ENCODE measurements at regions of chr14 and their contacts with region 1.

Region 1: GRCh38 chr14:63632932-63633514 is 8.6 kb downstream of the WDR89 start:
- DNase-seq: no peak
- H3K4me3 ChIP-seq: no peak overlapping the region
- H3K27ac ChIP-seq: no peak overlapping the region
- H3K4me1 ChIP-seq: no peaks in the 10 kb centered on the region
- H3K27me3 ChIP-seq: no peaks in the 10 kb centered on the region
- CTCF ChIP-seq: peak; percentile 59 to 72

Region 2: DNA sequence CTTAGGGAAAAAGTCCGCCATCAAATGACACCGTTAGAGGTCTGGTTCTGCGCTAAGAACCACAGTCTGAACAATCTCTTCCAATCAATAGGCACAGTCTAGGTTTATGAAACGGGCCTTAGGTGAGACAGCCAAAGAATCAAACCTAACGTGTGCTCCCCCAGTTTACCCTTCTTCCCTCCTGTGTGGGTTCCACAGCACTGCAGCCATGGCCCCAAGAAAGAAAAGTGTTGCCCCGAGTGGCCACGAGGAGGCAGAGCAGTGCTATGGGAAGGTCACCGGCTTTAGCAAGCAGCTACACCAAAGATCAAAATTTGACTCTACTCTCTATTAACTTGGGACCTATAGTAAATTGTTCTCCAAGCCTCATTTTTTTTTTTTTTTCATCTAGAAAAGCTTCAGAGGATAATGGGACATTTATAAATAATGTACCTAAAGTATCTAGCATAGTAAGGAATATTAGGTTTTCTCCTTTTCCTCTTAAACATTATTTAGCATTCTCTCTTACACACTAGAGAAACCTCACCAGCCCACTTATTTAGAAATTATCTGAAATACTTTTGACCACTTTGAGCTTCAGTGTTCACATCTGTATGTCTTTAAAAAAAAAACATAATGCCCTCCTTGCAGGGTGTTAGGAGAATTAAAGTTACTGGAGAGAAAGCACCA is 244.1 kb before region 1 on chr14:
- CTCF ChIA-PET with region 1: no interaction called
- dilution Hi-C with region 1: no loop called
- in situ Hi-C with region 1: no loop called
- intact Hi-C with region 1: loop called (anchors 1 kb)
- DNase-seq: peak; percentile 26
- H3K4me3 ChIP-seq: no peak overlapping the region
- H3K27ac ChIP-seq: no peak overlapping the region
- H3K4me1 ChIP-seq: no peaks in the 10 kb centered on the region
- H3K27me3 ChIP-seq: no peaks in the 10 kb centered on the region
- CTCF ChIP-seq: peak; percentile 85 to 89